Kidney (tissue), 22 donors: ENCODE measurements at regions of chr3 and their contacts with region 1.

Region 1: GRCh38 chr3:101803173-101803782 is 24.3 kb downstream of the NXPE3 start:
- DNase-seq: peak in 2 of 5 donors; percentile 78 to 91
- H3K4me3 ChIP-seq: no peak overlapping the region
- H3K27ac ChIP-seq: no peak overlapping the region
- H3K4me1 ChIP-seq: no peaks in the 10 kb centered on the region
- H3K27me3 ChIP-seq: no peaks in the 10 kb centered on the region
- CTCF ChIP-seq: peak; percentile 74

Region 2: GRCh38 chr3:101724329-101725193 is 78.7 kb before region 1 on chr3 and contains the start of gene CEP97:
- intact Hi-C with region 1: no loop called
- DNase-seq: peak; percentile 93 to 98 (median 96)
- H3K4me3 ChIP-seq: peak within 1 kb of the TSS; percentile 92 to 99 (median 97)
- H3K27ac ChIP-seq: peak within 1 kb of the TSS; percentile 75 to 96
- H3K4me1 ChIP-seq: peaks cover 0 to 3% (median 0%) of the 10 kb centered on the region in 3 donors
- H3K27me3 ChIP-seq: no peaks in the 10 kb centered on the region
- CTCF ChIP-seq: no peak
- total RNA-seq, gene CEP97: 7.5 TPM

Region 3: DNA sequence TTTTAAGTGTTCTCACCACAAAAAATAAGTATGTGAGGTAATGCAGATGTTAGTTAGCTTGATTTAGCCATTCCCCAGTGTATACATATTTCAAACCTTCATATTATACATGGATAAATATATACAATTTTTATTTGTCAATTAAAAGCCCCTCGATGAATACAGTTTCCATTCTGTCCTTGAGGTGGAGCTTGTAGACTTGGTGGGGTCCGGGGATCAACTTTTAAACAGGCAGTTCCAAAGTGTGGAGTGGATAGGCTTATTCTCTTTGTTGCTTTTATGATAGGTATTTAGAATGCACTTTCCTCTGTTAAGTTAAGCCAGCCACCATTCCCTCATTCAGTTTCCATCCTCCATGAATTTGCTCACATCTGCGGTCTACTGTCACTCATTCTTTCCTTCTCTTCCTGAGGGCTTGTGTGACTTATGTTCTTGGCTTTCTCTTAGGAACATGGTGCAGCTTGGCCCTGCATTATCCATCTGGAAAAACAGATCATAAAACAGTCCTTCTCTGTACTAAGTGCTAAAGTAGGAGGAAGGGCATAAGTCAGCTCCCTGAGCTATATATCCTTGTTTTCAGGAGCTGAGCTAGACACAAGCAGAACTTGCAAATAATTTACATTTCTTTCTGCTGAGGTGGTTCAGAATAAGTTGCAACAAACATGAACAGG is 195.1 kb after region 1 on chr3:
- intact Hi-C with region 1: no loop called
- DNase-seq: peak in 3 of 5 donors; percentile 16 to 76 (median 59)
- H3K4me3 ChIP-seq: no peak overlapping the region
- H3K27ac ChIP-seq: no peak overlapping the region
- H3K4me1 ChIP-seq: peaks cover 0 to 6% (median 0%) of the 10 kb centered on the region in 3 donors
- H3K27me3 ChIP-seq: no peaks in the 10 kb centered on the region
- CTCF ChIP-seq: no peak

Region 4: GRCh38 chr3:102544741-102545140 is 741.5 kb after region 1 on chr3:
- intact Hi-C with region 1: loop called (anchors 10 kb)
- DNase-seq: no peak
- H3K4me3 ChIP-seq: no peak overlapping the region
- H3K27ac ChIP-seq: no peak overlapping the region
- H3K4me1 ChIP-seq: no peaks in the 10 kb centered on the region
- H3K27me3 ChIP-seq: no peaks in the 10 kb centered on the region
- CTCF ChIP-seq: no peak